A673 (cell line): ENCODE measurements at regions of chr1 and their contacts with region 1.

Region 1: DNA sequence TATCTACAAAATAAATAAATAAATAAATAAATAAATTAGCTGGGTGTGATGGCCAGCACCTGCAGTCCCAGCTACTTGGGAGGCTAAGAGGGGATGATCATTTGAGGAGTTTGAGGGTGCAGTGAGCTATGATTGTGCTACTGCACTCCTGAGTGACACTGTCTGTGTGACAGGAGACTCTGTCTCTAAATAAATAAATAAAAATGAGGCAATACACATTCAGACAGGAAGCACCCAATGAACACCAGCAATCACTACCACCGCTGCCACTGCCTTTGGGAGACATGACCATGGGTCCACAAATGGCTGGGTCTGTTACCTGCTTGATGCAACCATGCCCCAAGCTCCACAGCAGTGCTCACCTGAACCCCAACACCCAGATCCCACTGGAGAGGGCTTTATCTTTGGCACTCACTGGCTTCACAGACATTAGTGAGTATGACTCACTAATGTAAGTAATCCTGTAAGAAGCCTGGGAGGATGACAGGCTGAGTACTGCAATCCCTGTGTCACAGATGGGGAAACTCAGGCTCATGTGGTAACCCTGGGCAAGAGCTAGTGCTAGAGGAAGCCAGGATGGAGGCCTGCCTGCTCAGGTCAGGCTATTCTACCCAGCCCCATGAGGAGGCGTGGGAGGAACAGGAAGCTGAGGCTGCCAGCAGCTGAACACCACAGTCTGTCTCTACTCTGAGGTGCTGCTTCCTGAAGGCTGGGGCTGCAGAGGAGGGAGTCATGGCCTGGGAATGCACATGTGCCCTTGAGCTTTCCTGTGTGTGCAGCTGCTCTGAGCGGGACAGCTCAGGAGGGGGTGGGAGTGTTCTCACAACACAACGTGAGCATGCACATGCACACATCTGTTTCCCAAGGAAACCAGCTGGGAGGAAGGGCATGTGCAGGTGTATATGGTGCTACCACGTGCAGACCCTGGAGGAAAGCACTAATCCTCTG is 43.0 kb downstream of the SLC9A1 start:
- DNase-seq: peak; percentile 91
- H3K4me3 ChIP-seq: no peak overlapping the region
- H3K27ac ChIP-seq: peak overlapping the region; percentile 49
- H3K4me1 ChIP-seq: peaks cover 22% of the 10 kb centered on the region
- H3K27me3 ChIP-seq: no peaks in the 10 kb centered on the region
- CTCF ChIP-seq: no peak

Region 2: DNA sequence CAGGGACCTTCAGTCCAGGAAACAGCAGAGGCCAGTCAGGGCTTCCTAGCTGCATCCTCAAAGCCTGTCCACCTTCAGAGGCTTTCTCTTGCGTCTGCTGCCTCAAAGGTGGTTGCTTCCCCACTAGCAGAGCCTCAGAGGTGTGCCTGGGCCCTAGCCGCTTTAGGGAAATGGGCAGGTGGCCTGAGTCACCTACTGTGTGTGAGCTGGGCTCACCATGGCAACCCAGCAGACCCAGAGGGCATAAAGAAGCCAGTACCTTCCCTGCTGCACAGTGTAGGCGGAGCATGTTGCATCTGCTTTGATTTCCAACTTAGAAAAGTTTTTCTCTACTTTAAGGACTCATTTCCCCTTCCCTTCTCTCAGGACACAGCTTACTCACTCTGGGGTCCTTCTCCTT is 30.6 kb after region 1 on chr1:
- CTCF ChIA-PET with region 1: interaction called, 11 read pairs
- POLR2A ChIA-PET with region 1: no interaction called
- intact Hi-C with region 1: no loop called
- DNase-seq: no peak
- H3K4me3 ChIP-seq: no peak overlapping the region
- H3K27ac ChIP-seq: no peak overlapping the region
- H3K4me1 ChIP-seq: peaks cover 31% of the 10 kb centered on the region
- H3K27me3 ChIP-seq: no peaks in the 10 kb centered on the region
- CTCF ChIP-seq: no peak

Region 3: DNA sequence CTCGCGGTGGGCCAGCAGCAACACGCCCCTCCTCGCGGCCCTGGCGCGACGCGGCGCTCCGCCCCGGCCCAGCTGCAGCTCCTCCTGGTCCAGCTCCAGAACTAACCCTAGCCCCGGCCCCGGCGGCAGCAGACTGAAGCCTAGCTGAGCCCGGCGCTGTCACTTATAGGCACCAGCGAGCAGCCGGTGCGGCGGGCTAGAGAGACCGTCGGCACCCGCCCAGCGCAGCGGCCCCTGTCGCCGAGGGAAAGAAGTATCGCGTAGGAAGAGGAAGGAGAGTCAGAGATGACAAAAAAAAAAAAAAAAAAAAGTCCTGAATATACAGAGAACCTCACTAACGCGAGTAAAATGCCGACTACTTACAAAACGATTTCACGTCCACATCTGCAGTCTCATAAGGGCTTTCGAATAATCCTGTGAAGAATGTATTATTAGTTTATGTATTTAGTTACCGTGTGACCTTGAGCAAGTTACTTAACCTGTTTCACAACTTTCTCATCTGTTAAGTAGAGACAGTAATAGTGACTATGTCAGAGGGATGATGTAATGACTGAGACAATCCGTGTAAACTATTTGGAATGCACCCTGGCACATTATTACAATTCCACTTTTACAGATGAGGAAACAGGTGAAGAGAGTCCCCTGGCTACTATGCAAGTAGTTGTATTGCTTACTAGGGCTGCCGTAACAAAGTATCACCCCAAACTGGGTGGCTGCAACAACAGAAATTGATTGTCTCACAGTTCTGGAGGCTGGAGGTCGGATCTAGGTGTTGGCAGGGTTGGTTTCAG is 43.3 kb after region 1 on chr1 and contains the start of gene SLC9A1:
- CTCF ChIA-PET with region 1: no interaction called
- POLR2A ChIA-PET with region 1: interaction called, 4 read pairs
- intact Hi-C with region 1: loop called (anchors 5 kb)
- DNase-seq: peak; percentile 93
- H3K4me3 ChIP-seq: peak within 1 kb of the TSS; percentile 74
- H3K27ac ChIP-seq: peak within 1 kb of the TSS; percentile 88
- H3K4me1 ChIP-seq: peaks cover 22% of the 10 kb centered on the region
- H3K27me3 ChIP-seq: no peaks in the 10 kb centered on the region
- CTCF ChIP-seq: peak; percentile 95
- total RNA-seq, gene SLC9A1: 27.0 and 30.2 TPM in 2 replicates